Left ventricle myocardium inferior (tissue), 1 donor: ENCODE measurements at regions of chr2 and their contacts with region 1.

Region 1: DNA sequence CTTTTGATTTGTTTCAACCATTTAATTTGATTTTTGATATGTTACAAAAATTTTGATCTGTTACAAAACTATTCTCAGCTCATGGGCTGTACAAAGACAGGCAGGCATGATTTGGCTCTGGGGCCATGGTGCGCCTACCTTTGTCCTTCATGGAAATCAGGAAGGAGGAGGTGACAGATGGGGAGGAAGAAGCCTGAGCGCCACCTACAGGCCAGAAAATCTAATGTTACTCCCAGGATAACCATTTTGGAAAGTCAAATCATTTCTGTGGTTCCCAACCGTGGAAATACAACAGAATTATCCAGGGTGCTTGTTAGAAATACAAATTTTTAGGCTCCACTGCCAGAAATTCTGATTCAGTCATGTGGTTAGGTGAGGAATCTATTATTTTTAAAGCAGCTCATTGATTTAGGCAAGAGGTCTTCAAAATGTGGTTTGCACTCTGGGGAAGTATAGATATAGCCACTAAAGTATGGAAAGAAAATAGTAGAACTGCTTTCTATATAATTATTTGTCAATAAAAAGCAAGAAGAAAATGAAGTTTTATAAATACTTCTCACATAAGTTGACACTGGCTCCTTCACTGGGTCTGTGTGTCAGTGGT is 93.9 kb downstream of the EVA1A start:
- DNase-seq: no peak
- H3K4me3 ChIP-seq: no peak overlapping the region
- H3K27ac ChIP-seq: no peak overlapping the region
- H3K4me1 ChIP-seq: no peaks in the 10 kb centered on the region
- H3K27me3 ChIP-seq: peaks cover 33% of the 10 kb centered on the region
- CTCF ChIP-seq: peak; percentile 37

Region 2: GRCh38 chr2:75608684-75609333 is 142.0 kb after region 1 on chr2:
- intact Hi-C with region 1: loop called (anchors 5 kb)
- DNase-seq: peak; percentile 46
- H3K4me3 ChIP-seq: peak overlapping the region; percentile 49
- H3K27ac ChIP-seq: no peak overlapping the region
- H3K4me1 ChIP-seq: peaks cover 5% of the 10 kb centered on the region
- H3K27me3 ChIP-seq: peaks cover 67% of the 10 kb centered on the region
- CTCF ChIP-seq: peak; percentile 95